Activated CD8-positive, alpha-beta memory T cell treated with anti-CD3 and anti-CD28 coated beads, Interleukin-2, amount 10 ng/mL, durations not matched to agents 7 days and 5 days (primary cell): ENCODE measurements at regions of chr12 and their contacts with region 1.

Region 1: GRCh38 chr12:102484428-102484958 is 4.1 kb upstream of the IGF1 start:
- DNase-seq: peak; percentile 79
- ATAC-seq: peak; percentile 79
- H3K4me3 Mint-ChIP-seq: peak overlapping the region; percentile 43
- H3K27ac Mint-ChIP-seq: peak overlapping the region; percentile 80
- H3K4me1 Mint-ChIP-seq: peaks cover 35% of the 10 kb centered on the region
- H3K27me3 Mint-ChIP-seq: no peaks in the 10 kb centered on the region

Region 2: GRCh38 chr12:102080842-102081241 is 403.7 kb before region 1 on chr12:
- CTCF ChIA-PET with region 1: no interaction called
- DNase-seq: no peak
- ATAC-seq: no peak
- H3K4me3 Mint-ChIP-seq: no peak overlapping the region
- H3K27ac Mint-ChIP-seq: no peak overlapping the region
- H3K4me1 Mint-ChIP-seq: no peaks in the 10 kb centered on the region
- H3K27me3 Mint-ChIP-seq: no peaks in the 10 kb centered on the region

Region 3: GRCh38 chr12:102169922-102170621 is 314.4 kb before region 1 on chr12:
- CTCF ChIA-PET with region 1: interaction called, 15 read pairs
- DNase-seq: no peak
- ATAC-seq: peak; percentile 51
- H3K4me3 Mint-ChIP-seq: no peak overlapping the region
- H3K27ac Mint-ChIP-seq: no peak overlapping the region
- H3K4me1 Mint-ChIP-seq: peaks cover 15% of the 10 kb centered on the region
- H3K27me3 Mint-ChIP-seq: no peaks in the 10 kb centered on the region

Region 4: GRCh38 chr12:102300824-102301461 is 183.6 kb before region 1 on chr12:
- CTCF ChIA-PET with region 1: interaction called, 20 read pairs
- DNase-seq: peak; percentile 61
- ATAC-seq: peak; percentile 98
- H3K4me3 Mint-ChIP-seq: no peak overlapping the region
- H3K27ac Mint-ChIP-seq: no peak overlapping the region
- H3K4me1 Mint-ChIP-seq: peaks cover 15% of the 10 kb centered on the region
- H3K27me3 Mint-ChIP-seq: peaks cover 13% of the 10 kb centered on the region

Region 5: DNA sequence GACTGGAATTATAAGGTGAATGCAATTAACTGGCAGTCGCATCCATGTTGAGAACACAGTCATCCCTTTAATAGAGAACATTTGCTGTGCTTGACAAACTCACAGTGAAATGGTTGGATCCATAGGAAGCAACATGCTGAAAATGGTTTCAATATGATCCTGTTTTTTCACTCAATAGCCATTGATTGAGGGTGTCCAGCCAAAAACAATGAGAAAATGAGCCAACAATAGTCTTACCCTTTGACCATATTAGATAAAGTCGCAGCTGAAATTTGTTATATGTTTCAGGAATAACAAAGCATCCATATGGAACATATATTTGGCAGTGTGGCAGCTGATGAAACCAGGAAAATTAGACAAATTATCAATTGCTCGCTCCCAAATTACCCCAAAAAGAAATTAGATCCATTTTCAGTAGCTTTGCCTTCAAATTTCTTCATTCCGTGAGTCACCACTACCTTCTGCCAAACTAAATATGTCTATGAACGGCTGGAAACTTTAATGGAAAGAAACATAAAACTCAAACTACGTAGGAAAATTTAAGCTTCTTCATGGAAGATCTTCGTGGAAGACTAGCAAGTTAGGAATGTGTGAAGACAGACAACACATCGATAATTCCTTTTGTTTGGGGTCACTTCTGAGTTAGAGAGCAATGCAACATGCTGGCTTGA is 21.6 kb before region 1 on chr12:
- CTCF ChIA-PET with region 1: interaction called, 10 read pairs
- DNase-seq: no peak
- ATAC-seq: no peak
- H3K4me3 Mint-ChIP-seq: no peak overlapping the region
- H3K27ac Mint-ChIP-seq: no peak overlapping the region
- H3K4me1 Mint-ChIP-seq: no peaks in the 10 kb centered on the region
- H3K27me3 Mint-ChIP-seq: peaks cover 40% of the 10 kb centered on the region

Region 6: DNA sequence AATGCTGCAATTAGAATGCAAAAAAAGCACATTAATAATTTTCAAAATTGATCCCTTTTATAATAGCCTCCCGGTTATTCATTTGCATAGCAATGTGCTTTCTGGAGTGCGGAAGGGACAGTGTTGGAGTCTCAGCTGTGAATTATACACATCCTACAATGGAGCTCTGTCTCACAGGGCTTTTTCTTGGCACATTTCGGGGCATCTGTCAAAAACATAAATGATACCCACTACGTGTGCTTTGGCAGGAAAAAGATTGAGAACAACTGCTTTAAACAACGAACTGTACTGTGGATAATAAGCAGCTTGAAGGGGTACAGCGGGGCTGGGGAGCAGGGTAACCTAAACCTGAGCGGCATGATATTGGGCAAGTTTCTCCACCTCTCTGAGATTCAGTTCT is 309.4 kb after region 1 on chr12:
- CTCF ChIA-PET with region 1: no interaction called
- DNase-seq: no peak
- ATAC-seq: no peak
- H3K4me3 Mint-ChIP-seq: no peak overlapping the region
- H3K27ac Mint-ChIP-seq: no peak overlapping the region
- H3K4me1 Mint-ChIP-seq: no peaks in the 10 kb centered on the region
- H3K27me3 Mint-ChIP-seq: peaks cover 7% of the 10 kb centered on the region